Caco-2 (cell line): ENCODE measurements at regions of chr19 and their contacts with region 1.

Region 1: GRCh38 chr19:58434217-58434616 is 5.7 kb downstream of the ZNF132 start:
- DNase-seq: no peak
- H3K4me3 ChIP-seq: no peak overlapping the region
- H3K4me3 Mint-ChIP-seq: no peak overlapping the region
- H3K27ac Mint-ChIP-seq: no peak overlapping the region
- H3K4me1 ChIP-seq: no peaks in the 10 kb centered on the region
- H3K4me1 Mint-ChIP-seq: no peaks in the 10 kb centered on the region
- H3K27me3 ChIP-seq: no peaks in the 10 kb centered on the region; the same call in 1 of the 2 replicates
- H3K27me3 Mint-ChIP-seq: peaks cover 3% of the 10 kb centered on the region
- CTCF ChIP-seq: no peak

Region 2: DNA sequence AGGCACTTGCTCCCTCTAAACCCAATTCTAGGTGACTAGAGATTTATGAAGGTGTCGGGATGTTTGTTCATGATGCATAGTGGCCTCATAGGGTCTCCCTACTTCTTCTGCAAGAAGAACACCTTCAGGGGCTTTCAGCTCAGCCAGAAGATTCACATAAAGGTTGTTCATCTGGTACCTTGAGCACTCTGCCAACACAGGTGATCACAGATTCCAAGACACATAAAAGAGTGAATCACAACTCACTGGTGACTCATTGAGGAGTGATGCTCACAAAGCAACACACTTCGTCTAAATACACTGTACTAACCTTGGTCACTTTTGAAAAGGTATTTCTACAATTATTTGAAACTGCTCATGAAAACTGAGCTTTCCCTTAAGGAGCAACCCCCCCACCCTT is 25.8 kb after region 1 on chr19:
- CTCF ChIA-PET with region 1: no interaction called
- POLR2A ChIA-PET with region 1: interaction called, 10 read pairs
- intact Hi-C with region 1: no loop called
- DNase-seq: no peak
- H3K4me3 ChIP-seq: no peak overlapping the region
- H3K4me3 Mint-ChIP-seq: no peak overlapping the region
- H3K27ac Mint-ChIP-seq: no peak overlapping the region
- H3K4me1 ChIP-seq: no peaks in the 10 kb centered on the region
- H3K4me1 Mint-ChIP-seq: no peaks in the 10 kb centered on the region
- H3K27me3 ChIP-seq: no peaks in the 10 kb centered on the region
- H3K27me3 Mint-ChIP-seq: no peaks in the 10 kb centered on the region
- CTCF ChIP-seq: no peak

Region 3: GRCh38 chr19:58538257-58539168 is 104.3 kb after region 1 on chr19:
- CTCF ChIA-PET with region 1: no interaction called
- POLR2A ChIA-PET with region 1: no interaction called
- intact Hi-C with region 1: no loop called
- DNase-seq: peak; percentile 89 to 94
- H3K4me3 ChIP-seq: peak overlapping the region; percentile 45
- H3K4me3 Mint-ChIP-seq: peak overlapping the region; percentile 87
- H3K27ac Mint-ChIP-seq: peak overlapping the region; percentile 92
- H3K4me1 ChIP-seq: 0 out of 2 replicates have a peak, but pooled peaks cover 5% of the 10 kb centered on the region
- H3K4me1 Mint-ChIP-seq: peaks cover 7% of the 10 kb centered on the region
- H3K27me3 ChIP-seq: no peaks in the 10 kb centered on the region
- H3K27me3 Mint-ChIP-seq: peaks cover 6% of the 10 kb centered on the region
- CTCF ChIP-seq: no peak